H1 (cell line): ENCODE measurements at regions of chr6 and their contacts with region 1.

Region 1: DNA sequence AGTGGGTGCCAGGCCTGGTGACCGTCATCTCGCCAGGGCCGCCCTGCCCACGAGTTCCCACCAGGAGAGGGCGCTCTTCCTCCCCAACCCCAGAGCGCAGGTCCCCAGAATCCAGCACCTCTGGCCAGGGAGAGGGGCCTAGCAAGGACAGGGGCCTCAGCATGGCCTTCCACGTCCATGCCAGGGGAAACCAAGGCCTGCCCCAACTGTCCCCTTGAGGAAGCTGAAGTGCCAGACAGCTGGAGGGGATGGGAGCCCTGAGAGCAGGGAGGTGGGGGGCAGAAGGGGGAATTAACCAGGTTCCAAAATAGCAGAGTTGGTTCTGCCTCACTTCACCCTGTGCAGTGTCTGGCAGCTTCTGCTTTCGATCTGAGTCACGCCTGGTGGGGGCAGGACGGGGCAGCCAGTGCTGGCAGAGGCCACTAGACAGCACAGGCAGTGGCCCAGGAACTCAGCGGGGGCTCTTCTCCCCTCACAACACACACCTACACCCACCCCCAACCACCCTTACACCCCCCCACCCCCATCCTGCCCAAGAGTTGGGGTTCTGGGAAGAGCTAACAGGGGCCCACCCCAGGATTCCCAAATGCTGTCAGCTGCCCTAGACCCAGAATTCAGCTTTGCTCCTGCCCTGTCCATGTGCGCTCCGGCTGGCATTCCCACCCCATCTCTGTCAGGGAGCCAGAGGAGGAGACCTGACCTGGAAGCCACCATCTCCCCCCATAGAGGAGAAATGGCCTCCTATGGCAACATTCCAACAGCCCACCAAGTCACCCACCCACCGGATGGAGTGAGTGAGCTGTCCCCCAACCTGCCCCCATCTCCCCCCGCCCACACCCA is 29.2 kb downstream of the TFEB start:
- DNase-seq: peak; percentile 56 to 92
- H3K4me3 ChIP-seq: no peak overlapping the region
- H3K27ac ChIP-seq: no peak overlapping the region
- H3K4me1 ChIP-seq: peaks cover 0 to 8% (median 3%) of the 10 kb centered on the region in 4 experiments; a peak in 4 of 7 replicates
- H3K27me3 ChIP-seq: no peaks in the 10 kb centered on the region; a peak in 1 of 7 replicates
- CTCF ChIP-seq: peak in 2 of 3 experiments; percentile 92 to 97; a peak in 3 of 4 replicates
- EP300 ChIP-seq: no peak
- POLR2A ChIP-seq: no peak
- RAD21 ChIP-seq: peak; percentile 68 to 81

Region 2: GRCh38 chr6:41663563-41663962 is 42.7 kb before region 1 on chr6:
- CTCF ChIA-PET with region 1: no interaction called
- POLR2A ChIA-PET with region 1: no interaction called
- DNase-seq: no peak
- H3K4me3 ChIP-seq: no peak overlapping the region
- H3K27ac ChIP-seq: no peak overlapping the region
- H3K4me1 ChIP-seq: peaks cover 0 to 3% (median under 1%) of the 10 kb centered on the region in 4 experiments; a peak in 3 of 7 replicates
- H3K27me3 ChIP-seq: no peaks in the 10 kb centered on the region
- CTCF ChIP-seq: no peak
- EP300 ChIP-seq: no peak
- POLR2A ChIP-seq: no peak
- RAD21 ChIP-seq: no peak; a peak in 1 of 4 replicates

Region 3: GRCh38 chr6:41723530-41724227 is 17.5 kb after region 1 on chr6:
- CTCF ChIA-PET with region 1: interaction called, 99 read pairs
- POLR2A ChIA-PET with region 1: interaction called, 3 read pairs
- DNase-seq: no peak
- H3K4me3 ChIP-seq: no peak overlapping the region
- H3K27ac ChIP-seq: no peak overlapping the region
- H3K4me1 ChIP-seq: peaks cover 0 to 13% (median 8%) of the 10 kb centered on the region in 4 experiments; a peak in 5 of 7 replicates
- H3K27me3 ChIP-seq: no peaks in the 10 kb centered on the region
- CTCF ChIP-seq: no peak
- EP300 ChIP-seq: no peak
- POLR2A ChIP-seq: no peak
- RAD21 ChIP-seq: no peak

Region 4: GRCh38 chr6:41741625-41742489 is 35.6 kb after region 1 on chr6:
- CTCF ChIA-PET with region 1: interaction called, 37 read pairs
- POLR2A ChIA-PET with region 1: no interaction called
- DNase-seq: no peak
- H3K4me3 ChIP-seq: no peak overlapping the region
- H3K27ac ChIP-seq: no peak overlapping the region
- H3K4me1 ChIP-seq: no peaks in the 10 kb centered on the region; a peak in 1 of 7 replicates
- H3K27me3 ChIP-seq: no peaks in the 10 kb centered on the region; a peak in 2 of 7 replicates
- CTCF ChIP-seq: no peak
- EP300 ChIP-seq: no peak
- POLR2A ChIP-seq: no peak
- RAD21 ChIP-seq: no peak

Region 5: GRCh38 chr6:41767156-41767833 is 61.1 kb after region 1 on chr6:
- CTCF ChIA-PET with region 1: interaction called, 12 read pairs
- POLR2A ChIA-PET with region 1: no interaction called
- DNase-seq: no peak
- H3K4me3 ChIP-seq: no peak overlapping the region
- H3K27ac ChIP-seq: no peak overlapping the region; the same call in 1 of the 2 replicates
- H3K4me1 ChIP-seq: no peaks in the 10 kb centered on the region; a peak in 1 of 7 replicates
- H3K27me3 ChIP-seq: no peaks in the 10 kb centered on the region
- CTCF ChIP-seq: no peak
- EP300 ChIP-seq: no peak
- POLR2A ChIP-seq: no peak
- RAD21 ChIP-seq: no peak

Region 6: GRCh38 chr6:41859356-41859755 is 153.1 kb after region 1 on chr6:
- CTCF ChIA-PET with region 1: no interaction called
- POLR2A ChIA-PET with region 1: no interaction called
- DNase-seq: no peak
- H3K4me3 ChIP-seq: no peak overlapping the region
- H3K27ac ChIP-seq: no peak overlapping the region
- H3K4me1 ChIP-seq: no peaks in the 10 kb centered on the region
- H3K27me3 ChIP-seq: no peaks in the 10 kb centered on the region
- CTCF ChIP-seq: no peak
- EP300 ChIP-seq: no peak
- POLR2A ChIP-seq: no peak
- RAD21 ChIP-seq: no peak